Lower leg skin (tissue), 4 donors: ENCODE measurements at regions of chr19 and their contacts with region 1.

Region 1: DNA sequence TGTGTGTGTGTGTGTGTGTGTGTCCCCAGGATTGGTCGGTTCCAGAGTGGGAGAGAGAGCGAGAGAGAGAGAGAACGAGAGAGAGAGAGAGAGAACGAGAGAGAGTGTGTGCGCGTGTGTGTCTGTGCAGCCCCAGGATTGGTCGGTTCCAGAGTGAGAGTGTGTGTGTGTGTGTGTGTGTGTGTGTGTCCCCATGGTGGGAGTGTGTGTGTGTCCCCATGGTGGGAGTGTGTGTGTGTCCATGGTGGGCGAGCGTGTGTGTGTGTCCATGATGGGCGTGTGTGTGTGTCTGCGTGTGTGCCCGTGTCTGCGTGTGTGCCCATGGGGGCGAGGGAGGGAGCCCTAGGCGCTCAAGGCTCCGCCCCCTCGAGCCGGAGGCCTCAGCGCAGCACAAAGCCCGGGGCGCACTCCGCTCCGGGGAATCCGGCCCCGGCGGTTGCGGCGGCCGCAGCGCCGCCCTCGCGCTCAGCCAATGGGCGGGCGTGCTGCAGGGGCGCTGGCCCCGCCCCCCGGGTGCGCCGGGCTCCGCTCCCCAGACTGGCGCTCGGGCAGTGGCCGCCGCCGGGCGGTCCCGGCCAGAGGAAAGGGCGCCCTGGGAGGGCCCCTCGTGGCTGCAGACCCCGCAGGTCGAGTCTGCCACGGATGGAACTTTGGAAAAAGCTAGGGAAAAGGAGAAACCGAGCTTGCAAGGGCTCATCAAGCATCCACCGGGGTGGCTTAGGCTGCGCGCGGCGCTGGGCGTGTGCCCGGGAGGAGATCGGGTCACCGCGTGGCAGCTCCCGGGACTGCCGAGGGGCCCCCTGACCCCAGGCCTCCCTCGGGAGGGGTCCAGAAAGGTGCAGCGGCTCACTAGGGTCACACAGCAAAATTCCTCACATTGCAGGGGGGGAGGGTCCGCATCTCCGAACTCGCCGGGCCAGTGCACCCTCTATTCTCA is 96.2 kb downstream of the INSR start:
- DNase-seq: peak; percentile 83 to 98
- H3K4me3 ChIP-seq: peak overlapping the region; percentile 42
- CTCF ChIP-seq: peak in 1 of 3 donors; percentile 26
- POLR2A ChIP-seq: no peak

Region 2: DNA sequence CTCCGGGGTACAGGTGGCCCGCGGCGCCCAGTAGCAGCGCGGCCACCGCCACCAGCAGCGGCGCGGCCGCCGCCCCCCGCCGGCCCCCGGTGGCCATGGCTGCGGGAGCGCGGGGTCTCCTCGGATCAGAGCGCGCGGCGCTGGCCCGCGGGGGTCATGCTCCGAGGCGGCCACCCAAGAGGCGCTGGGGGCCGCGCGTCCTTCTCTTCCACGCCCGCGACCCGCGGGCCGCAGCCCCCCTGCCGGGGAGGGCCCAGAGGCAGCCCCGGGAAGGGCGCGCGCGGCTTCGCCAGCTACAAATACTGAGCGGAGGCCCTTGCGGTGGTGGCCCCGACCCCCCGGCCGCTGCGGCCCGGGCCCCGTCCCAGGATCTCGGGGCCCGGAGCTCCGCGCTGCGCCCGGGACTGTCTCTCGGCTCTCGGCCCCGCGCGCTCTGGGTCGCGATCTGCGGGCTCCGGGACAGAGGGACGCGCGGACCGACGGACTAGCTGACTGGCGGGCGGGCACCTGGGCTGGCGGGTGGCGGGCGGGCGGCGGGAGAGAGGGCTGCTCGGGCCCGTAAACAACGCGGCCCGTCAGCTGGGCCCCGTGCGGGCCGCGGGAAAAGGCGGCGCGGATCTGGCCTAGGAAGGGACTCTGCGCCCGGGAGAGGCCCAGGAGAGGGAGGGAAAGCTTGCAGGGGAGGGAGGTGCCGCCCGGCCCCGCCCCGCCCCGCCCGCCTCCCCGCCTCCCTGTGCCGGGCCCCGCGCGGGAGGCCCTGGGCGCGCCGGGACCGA is 96.0 kb after region 1 on chr19 and contains the start of gene INSR:
- intact Hi-C with region 1: loop called (anchors 10 kb)
- DNase-seq: peak; percentile 80 to 96
- H3K4me3 ChIP-seq: peak within 1 kb of the TSS; percentile 90
- CTCF ChIP-seq: no peak
- POLR2A ChIP-seq: no peak
- total RNA-seq, gene INSR: 70.7 to 165 (median 89.2) TPM